Posterior vena cava (tissue), 2 donors: ENCODE measurements at regions of chr4 and their contacts with region 1.

Region 1: GRCh38 chr4:155468282-155468681 is 91.5 kb upstream of the MAP9 start:
- DNase-seq: no peak

Region 2: GRCh38 chr4:155445306-155445705 is 23.0 kb before region 1 on chr4:
- intact Hi-C with region 1: no loop called
- DNase-seq: no peak

Region 3: DNA sequence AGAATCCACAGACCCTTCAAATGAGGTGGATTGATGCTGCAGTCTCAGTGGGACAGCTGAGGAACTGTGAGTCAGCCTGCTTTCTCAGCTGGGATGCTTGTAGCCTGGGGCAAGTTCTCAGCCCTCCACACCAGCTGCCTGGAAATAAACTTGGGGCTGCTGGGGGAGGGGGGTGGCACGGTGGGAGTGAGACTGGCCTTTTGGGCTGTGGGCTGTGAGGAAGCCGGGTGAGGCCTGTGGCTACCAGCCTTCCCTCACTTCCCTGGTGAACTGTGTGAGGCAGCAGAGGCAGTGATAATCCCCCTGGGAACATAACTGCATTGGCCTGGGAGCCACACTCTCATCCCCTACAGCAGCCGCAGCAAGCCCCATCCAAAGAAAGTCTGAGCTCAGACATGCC is 83.9 kb after region 1 on chr4:
- intact Hi-C with region 1: loop called in 1 of 2 experiments (anchors 5 kb)
- DNase-seq: no peak